Transverse colon (tissue), 4 donors: ENCODE measurements at regions of chr7 and their contacts with region 1.

Region 1: GRCh38 chr7:146948703-146949102 is 832.1 kb downstream of the CNTNAP2 start:
- DNase-seq: no peak
- H3K4me3 ChIP-seq: no peak overlapping the region
- H3K27ac ChIP-seq: no peak overlapping the region
- H3K4me1 ChIP-seq: no peaks in the 10 kb centered on the region
- H3K27me3 ChIP-seq: no peaks in the 10 kb centered on the region
- CTCF ChIP-seq: no peak
- EP300 ChIP-seq: no peak
- POLR2A ChIP-seq: no peak

Region 2: GRCh38 chr7:147033641-147034040 is 84.9 kb after region 1 on chr7:
- in situ Hi-C with region 1: loop called in 1 of 4 experiments (anchors 25 kb)
- intact Hi-C with region 1: no loop called
- DNase-seq: no peak
- H3K4me3 ChIP-seq: no peak overlapping the region
- H3K27ac ChIP-seq: no peak overlapping the region
- H3K4me1 ChIP-seq: no peaks in the 10 kb centered on the region
- H3K27me3 ChIP-seq: no peaks in the 10 kb centered on the region
- CTCF ChIP-seq: no peak
- EP300 ChIP-seq: no peak
- POLR2A ChIP-seq: no peak

Region 3: DNA sequence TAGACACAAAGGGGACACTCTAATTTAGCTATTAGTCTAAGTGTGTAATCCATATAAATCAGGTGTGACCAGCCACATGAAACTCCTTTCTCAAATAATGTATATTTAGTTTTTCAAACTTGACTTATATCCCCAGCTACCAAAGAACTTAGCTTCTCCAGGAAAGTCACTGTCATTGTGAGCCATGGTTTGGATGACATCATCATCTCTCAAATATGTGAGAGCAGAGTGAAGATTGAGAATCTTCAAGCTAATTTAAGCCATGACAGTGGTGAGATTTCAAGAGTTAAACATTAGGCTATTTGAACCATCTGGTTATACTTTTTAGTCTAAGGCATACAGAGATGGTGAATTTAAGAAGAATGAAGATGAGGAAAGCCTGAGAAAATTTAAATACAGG is 333.5 kb after region 1 on chr7:
- in situ Hi-C with region 1: no loop called
- intact Hi-C with region 1: no loop called
- DNase-seq: no peak
- H3K4me3 ChIP-seq: no peak overlapping the region
- H3K27ac ChIP-seq: no peak overlapping the region
- H3K4me1 ChIP-seq: no peaks in the 10 kb centered on the region
- H3K27me3 ChIP-seq: no peaks in the 10 kb centered on the region
- CTCF ChIP-seq: no peak
- EP300 ChIP-seq: no peak
- POLR2A ChIP-seq: no peak

Region 4: DNA sequence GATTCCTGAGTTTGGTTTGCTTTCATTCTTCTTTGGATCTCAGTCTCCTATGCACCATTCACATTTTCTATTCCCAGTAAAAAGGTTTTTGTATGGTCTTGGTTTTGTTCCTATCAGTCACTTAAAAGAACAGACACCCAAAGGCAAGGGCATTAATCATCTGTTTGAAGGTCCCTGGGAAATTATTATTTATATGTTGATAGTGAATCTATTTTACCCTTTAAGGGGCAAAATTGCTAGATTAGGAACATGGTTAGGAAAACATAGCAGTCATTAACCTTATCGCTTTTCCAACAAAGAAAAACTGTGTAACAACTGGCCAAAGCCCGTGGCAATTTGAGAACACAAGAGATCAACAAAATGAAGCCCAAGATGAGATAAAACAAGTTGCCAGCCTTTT is 495.2 kb after region 1 on chr7:
- in situ Hi-C with region 1: no loop called
- intact Hi-C with region 1: no loop called
- DNase-seq: no peak
- H3K4me3 ChIP-seq: no peak overlapping the region
- H3K27ac ChIP-seq: no peak overlapping the region
- H3K4me1 ChIP-seq: no peaks in the 10 kb centered on the region
- H3K27me3 ChIP-seq: no peaks in the 10 kb centered on the region
- CTCF ChIP-seq: no peak
- EP300 ChIP-seq: no peak
- POLR2A ChIP-seq: no peak